Right lobe of liver (tissue), 6 donors: ENCODE measurements at regions of chr6 and their contacts with region 1.

Region 1: DNA sequence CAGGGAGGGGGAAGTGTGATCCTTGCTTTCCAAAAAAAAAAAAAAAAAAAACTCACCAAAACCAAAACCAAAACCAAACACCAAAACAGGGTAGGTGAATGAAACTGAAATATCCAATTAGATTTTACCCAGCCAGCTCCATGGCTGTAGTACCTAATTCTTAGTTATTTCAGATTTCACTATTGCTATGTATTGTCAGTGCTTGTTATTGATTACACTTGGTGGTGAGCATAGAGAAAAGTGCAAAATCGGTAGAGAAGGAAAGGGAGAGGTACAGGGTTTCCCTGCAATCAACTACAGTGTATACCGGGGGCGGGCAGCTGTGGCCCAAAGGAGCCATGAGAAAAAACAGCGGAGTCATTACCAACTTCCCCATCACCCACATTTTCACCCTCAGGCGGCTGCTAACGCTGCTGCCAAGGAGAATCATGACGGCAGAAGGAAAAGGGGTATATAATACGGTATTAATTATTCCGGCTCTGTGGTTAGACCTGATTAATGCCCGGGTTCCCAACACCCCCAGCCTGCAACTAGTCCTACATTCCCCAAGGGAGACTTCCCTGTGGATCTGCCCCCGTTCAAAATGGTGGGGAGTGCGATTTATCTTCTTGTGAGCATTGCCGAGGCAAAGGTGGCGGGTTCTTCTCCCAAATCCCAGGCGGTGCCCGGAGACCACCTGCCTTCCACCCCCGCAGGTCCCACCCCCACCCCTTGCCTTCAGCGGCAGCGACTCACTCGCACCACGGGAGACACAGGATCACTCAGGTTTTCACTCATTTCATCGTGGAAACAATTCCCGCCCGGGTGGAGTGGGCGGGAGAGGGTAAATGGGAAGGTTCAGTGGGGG is at the start of gene C6orf62:
- DNase-seq: peak in 1 of 3 donors; percentile 34
- ATAC-seq: no peak
- H3K4me3 ChIP-seq: peak within 1 kb of the TSS; percentile 76 to 96 (median 96)
- H3K27ac ChIP-seq: peak within 1 kb of the TSS; percentile 93 to 99 (median 99)
- H3K4me1 ChIP-seq: peaks cover 0 to 33% (median 10%) of the 10 kb centered on the region in 4 donors
- H3K27me3 ChIP-seq: no peaks in the 10 kb centered on the region
- CTCF ChIP-seq: no peak
- POLR2A ChIP-seq: no peak
- total RNA-seq, gene C6orf62: 31.1 to 58.3 (median 48.7) TPM

Region 2: GRCh38 chr6:24415753-24416152 is 303.6 kb before region 1 on chr6:
- intact Hi-C with region 1: no loop called
- DNase-seq: no peak
- ATAC-seq: no peak
- H3K4me3 ChIP-seq: no peak overlapping the region
- H3K27ac ChIP-seq: no peak overlapping the region
- H3K4me1 ChIP-seq: no peaks in the 10 kb centered on the region
- H3K27me3 ChIP-seq: no peaks in the 10 kb centered on the region
- CTCF ChIP-seq: no peak
- POLR2A ChIP-seq: no peak

Region 3: GRCh38 chr6:24766680-24767462 is 47.5 kb after region 1 on chr6:
- intact Hi-C with region 1: loop called in 1 of 2 experiments (anchors 10 kb)
- DNase-seq: no peak
- ATAC-seq: peak; percentile 74 to 90 (median 81)
- H3K4me3 ChIP-seq: no peak overlapping the region
- H3K27ac ChIP-seq: no peak overlapping the region
- H3K4me1 ChIP-seq: peaks cover 0 to 4% (median 0%) of the 10 kb centered on the region in 4 donors
- H3K27me3 ChIP-seq: no peaks in the 10 kb centered on the region
- CTCF ChIP-seq: peak; percentile 51 to 57 (median 54)
- POLR2A ChIP-seq: no peak

Region 4: DNA sequence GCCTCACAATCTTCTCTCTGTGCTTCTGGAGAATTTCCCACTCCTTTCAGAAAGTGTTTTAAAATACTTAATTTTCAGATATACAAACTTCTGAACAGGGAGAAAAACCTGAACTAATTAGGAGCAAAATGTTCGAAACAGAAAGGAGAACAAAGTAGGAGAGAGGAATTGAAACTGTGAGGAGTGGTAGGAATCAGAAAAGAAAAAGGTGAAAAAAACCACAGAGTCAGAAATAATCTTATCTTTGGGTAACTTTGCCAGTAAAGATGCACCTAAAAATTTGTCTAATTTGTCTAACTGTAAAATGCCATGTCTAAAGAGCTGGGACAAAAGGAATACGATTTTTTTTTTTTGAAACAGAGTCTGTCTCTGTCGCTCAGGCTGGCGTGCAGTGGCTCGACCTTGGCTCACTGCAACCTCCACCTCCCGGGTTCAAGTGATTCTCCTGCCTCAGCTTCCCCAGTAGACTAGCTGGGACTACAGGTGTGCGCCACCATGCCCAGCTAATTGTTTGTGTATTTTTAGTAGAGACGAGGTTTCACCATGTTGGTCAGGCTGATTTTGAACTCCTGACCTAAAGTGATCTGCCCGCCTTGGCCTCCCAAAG is 221.1 kb after region 1 on chr6:
- intact Hi-C with region 1: no loop called
- DNase-seq: no peak
- ATAC-seq: no peak
- H3K4me3 ChIP-seq: no peak overlapping the region
- H3K27ac ChIP-seq: no peak overlapping the region
- H3K4me1 ChIP-seq: no peaks in the 10 kb centered on the region
- H3K27me3 ChIP-seq: no peaks in the 10 kb centered on the region
- CTCF ChIP-seq: no peak
- POLR2A ChIP-seq: no peak